ENCODE measurements at regions of chr17 and their contacts with region 1.

Region 1: DNA sequence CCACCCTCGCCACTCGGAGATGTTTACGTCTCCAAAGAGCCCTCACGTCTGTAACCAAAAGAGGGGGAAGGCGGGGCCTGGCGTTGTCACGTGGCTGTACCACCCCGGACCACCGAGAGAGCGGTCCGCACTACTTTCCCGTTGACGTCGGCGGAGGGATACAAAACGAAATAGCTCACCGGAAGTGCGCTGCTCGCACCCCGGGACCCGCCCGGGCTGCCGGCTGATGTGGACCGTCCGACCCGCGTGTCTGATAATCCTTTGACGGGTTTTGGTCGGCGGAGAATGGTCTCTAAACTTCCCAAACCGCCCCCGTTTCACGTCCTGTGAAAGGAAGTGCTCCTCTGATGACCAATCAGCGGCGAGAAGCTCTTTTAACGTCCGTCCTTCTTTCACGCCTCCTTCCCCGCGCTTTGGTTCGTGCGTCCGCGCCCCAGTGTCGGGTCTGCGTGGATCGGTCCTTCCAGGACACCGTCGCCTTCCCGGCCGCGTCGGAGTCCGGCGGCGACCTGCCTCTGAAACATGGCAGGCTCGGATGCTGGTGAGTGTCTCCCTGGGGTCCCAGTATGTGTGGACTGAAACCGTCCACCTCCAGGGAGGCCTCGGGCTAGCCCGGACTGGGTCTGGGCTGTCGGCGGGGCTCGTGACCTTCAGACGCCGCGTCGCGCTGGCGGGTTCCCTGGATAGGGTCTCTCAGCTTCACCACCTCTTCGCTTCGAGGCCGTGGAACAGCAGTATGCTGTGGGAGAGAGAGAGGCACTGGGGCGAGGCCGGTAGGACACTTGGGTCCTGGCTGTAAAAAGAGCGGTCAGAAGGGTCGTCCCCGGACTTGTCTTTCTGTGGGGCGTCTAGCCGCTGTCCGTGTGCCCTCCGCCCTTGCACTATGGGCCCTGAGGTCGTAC is at the start of gene CEP95:
- H3K4me3 ChIP-seq: peak within 1 kb of the TSS; percentile 100
- H3K27ac ChIP-seq: peak within 1 kb of the TSS; percentile 97
- H3K4me1 ChIP-seq: 0 out of 2 replicates have a peak, but pooled peaks cover 4% of the 10 kb centered on the region
- CTCF ChIP-seq: no peak; the same call in 1 of the 2 replicates

Region 2: GRCh38 chr17:64411999-64412771 is 94.6 kb before region 1 on chr17:
- CTCF ChIA-PET with region 1: no interaction called
- POLR2A ChIA-PET with region 1: no interaction called
- H3K4me3 ChIP-seq: no peak overlapping the region
- H3K27ac ChIP-seq: no peak overlapping the region
- H3K4me1 ChIP-seq: no peaks in the 10 kb centered on the region
- CTCF ChIP-seq: no peak

Region 3: DNA sequence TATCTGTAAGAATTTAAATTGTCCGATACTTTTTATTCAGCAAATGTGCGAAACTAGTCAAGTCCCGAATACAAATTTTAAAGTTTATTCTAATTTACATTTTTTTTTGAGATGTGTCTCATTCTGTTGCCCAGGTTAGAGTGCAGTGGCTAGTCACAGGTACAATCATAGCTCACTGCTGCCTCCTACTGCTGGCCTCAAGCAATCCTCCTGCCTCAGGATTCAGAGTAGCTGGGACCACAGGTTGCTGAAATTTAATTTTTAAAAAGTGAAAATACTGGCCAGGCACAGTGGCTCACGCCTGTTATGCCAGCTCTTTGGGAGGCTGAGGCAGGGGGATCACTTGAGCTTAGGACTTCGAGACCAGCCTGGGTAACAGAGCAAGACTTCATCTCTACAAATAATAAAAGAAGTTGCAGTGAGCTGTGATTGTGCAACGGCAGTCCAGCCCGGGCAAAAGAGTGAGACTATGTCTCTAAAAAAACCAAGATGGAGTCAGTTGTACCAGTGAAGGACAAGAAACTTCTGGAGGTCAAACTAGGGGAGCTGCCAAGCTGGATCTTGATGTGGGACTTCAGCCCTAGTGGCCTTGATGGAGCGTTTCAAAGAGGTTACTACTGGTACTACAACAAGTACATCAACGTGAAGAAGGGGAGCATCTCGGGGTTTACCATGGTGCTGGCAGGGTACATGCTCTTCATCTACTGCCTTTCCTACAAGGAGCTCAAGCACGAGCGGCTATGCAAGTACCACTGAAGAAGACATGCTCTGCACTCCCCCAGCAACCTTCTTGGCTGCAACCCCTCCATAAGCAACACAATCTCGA is 15.6 kb before region 1 on chr17:
- CTCF ChIA-PET with region 1: interaction called, 3 read pairs
- POLR2A ChIA-PET with region 1: interaction called, 146 read pairs
- H3K4me3 ChIP-seq: no peak overlapping the region
- H3K27ac ChIP-seq: no peak overlapping the region
- H3K4me1 ChIP-seq: no peaks in the 10 kb centered on the region
- CTCF ChIP-seq: no peak

Region 4: DNA sequence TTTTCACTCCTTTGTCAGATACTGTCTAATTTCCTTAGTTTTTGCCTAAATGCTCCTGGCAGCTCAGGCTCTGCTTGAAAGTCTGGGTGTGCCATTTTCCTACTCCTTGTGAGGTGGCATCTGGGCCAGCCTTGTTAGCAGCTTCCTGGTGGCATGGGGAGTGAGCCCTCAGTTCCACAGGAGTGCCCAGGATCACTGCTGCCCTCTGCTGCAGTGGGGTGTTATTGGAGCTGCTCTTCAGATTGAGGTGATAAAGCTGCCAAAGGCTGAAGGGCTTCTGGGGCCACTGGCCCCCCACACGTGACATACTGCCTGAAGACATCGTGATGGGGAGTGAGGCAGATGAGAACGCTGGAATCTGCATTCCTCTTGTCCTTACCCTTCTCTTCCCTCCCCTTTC is 27.3 kb after region 1 on chr17:
- CTCF ChIA-PET with region 1: no interaction called
- POLR2A ChIA-PET with region 1: interaction called, 14 read pairs
- H3K4me3 ChIP-seq: no peak overlapping the region
- H3K27ac ChIP-seq: no peak overlapping the region
- H3K4me1 ChIP-seq: no peaks in the 10 kb centered on the region
- CTCF ChIP-seq: no peak

Region 5: DNA sequence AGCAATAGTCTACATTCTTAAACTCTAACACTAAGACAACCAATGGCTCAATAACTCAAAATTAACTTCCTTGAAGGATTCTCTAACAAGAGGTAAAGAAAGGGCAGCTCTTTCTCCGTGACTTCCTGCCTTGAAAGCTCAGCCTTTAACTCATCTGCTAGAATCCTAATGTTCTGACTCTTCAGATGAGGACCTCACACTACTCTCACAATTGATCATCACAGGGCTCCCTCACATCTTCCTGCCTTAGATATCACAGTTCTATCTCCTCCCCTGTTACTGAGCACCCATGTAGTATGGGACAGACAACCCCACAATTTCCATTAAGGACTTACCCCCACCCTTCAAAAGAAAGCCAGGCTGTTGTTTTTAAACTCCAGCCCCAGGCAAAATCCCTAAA is 121.8 kb after region 1 on chr17:
- CTCF ChIA-PET with region 1: no interaction called
- POLR2A ChIA-PET with region 1: interaction called, 10 read pairs
- H3K4me3 ChIP-seq: no peak overlapping the region
- H3K27ac ChIP-seq: no peak overlapping the region
- H3K4me1 ChIP-seq: peaks cover 8% of the 10 kb centered on the region
- CTCF ChIP-seq: no peak

Region 6: DNA sequence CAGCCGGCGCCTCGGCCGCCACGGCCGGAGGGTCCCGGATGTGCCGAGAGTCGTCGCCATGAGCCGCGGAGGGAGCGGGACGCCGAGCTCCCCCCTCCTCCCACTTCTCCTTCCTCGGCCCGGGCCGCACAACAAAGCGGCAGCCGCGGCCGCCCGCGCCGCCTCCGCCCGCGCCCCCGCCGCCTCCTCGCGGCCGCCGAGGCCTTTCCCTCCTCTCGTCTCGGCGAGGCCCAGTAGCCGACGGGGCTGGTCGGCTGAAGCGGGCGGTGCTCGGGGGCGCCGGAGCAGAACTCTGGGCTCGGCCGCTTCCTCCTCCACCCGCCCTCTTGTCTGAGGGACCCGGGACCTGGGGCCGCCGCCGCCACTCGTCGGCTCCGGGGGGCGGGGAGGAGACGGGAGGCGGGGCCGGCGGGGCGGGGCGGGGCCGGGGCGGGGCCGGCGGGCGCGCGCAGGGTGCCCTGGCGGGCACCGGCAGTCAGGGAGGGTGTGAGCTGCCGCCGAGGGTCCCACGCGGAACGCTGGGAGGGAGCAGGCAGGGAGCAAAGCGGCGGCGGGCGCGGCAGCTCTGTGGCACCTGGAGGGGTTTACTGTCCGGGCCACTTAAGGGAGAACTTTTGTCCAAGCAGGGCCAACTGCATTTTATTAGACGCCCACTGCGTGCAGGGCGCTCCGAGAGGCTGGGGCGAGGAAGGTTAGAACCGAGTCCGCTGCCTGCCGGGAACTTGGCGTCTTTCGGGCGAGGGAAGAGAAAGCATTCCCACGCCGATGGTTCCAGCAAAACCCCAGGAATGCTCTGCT is 155.3 kb after region 1 on chr17 and contains the start of gene SMURF2:
- CTCF ChIA-PET with region 1: no interaction called
- POLR2A ChIA-PET with region 1: interaction called, 12 read pairs
- H3K4me3 ChIP-seq: peak within 1 kb of the TSS; percentile 82
- H3K27ac ChIP-seq: peak within 1 kb of the TSS; percentile 97
- H3K4me1 ChIP-seq: peaks cover 21% of the 10 kb centered on the region
- CTCF ChIP-seq: no peak